ENCODE measurements at regions of chr2 and their contacts with region 1.

Region 1: GRCh38 chr2:165015052-165015642 is 59.8 kb upstream of the SLC38A11 start:
- DNase-seq: peak; percentile 54
- CTCF ChIP-seq: peak; percentile 90

Region 2: GRCh38 chr2:165032559-165032958 is 17.4 kb after region 1 on chr2:
- CTCF ChIA-PET with region 1: interaction called, 11 read pairs
- POLR2A ChIA-PET with region 1: no interaction called
- DNase-seq: no peak
- CTCF ChIP-seq: no peak